IMR-90 (cell line): ENCODE measurements at regions of chr9 and their contacts with region 1.

Region 1: GRCh38 chr9:89597711-89598625 is 6.8 kb upstream of the GADD45G start:
- DNase-seq: peak; percentile 59
- ATAC-seq: peak; percentile 81
- H3K4me3 ChIP-seq: no peak overlapping the region
- H3K27ac ChIP-seq: no peak overlapping the region
- H3K4me1 ChIP-seq: peaks cover 3% of the 10 kb centered on the region; the same call in 1 of the 2 replicates
- H3K27me3 ChIP-seq: peaks cover 36% of the 10 kb centered on the region
- CTCF ChIP-seq: peak; percentile 77
- POLR2A ChIP-seq: no peak
- RAD21 ChIP-seq: peak; percentile 88

Region 2: GRCh38 chr9:90219548-90220118 is 621.7 kb after region 1 on chr9:
- CTCF ChIA-PET with region 1: no interaction called
- POLR2A ChIA-PET with region 1: no interaction called
- dilution Hi-C with region 1: no loop called
- in situ Hi-C with region 1: no loop called
- intact Hi-C with region 1: loop called (anchors 5 kb)
- DNase-seq: no peak
- ATAC-seq: no peak
- H3K4me3 ChIP-seq: no peak overlapping the region
- H3K27ac ChIP-seq: no peak overlapping the region
- H3K4me1 ChIP-seq: no peaks in the 10 kb centered on the region
- H3K27me3 ChIP-seq: no peaks in the 10 kb centered on the region
- CTCF ChIP-seq: no peak; the same call in 1 of the 2 replicates
- POLR2A ChIP-seq: no peak
- RAD21 ChIP-seq: no peak